Activated naive CD4-positive, alpha-beta T cell treated with anti-CD3 and anti-CD28 coated beads for 36 hours (primary cell): ENCODE measurements at regions of chr2 and their contacts with region 1.

Region 1: GRCh38 chr2:3223080-3223923 is 154.3 kb downstream of the EIPR1 start:
- DNase-seq: peak; percentile 97
- H3K4me3 Mint-ChIP-seq: peak overlapping the region; percentile 35
- H3K27ac Mint-ChIP-seq: peak overlapping the region; percentile 100
- H3K4me1 Mint-ChIP-seq: peaks cover 44% of the 10 kb centered on the region
- H3K27me3 Mint-ChIP-seq: no peaks in the 10 kb centered on the region

Region 2: GRCh38 chr2:1613731-1614354 is 1609.5 kb before region 1 on chr2:
- CTCF ChIA-PET with region 1: no interaction called
- intact Hi-C with region 1: no loop called
- DNase-seq: no peak
- H3K4me3 Mint-ChIP-seq: no peak overlapping the region
- H3K27ac Mint-ChIP-seq: no peak overlapping the region
- H3K4me1 Mint-ChIP-seq: no peaks in the 10 kb centered on the region
- H3K27me3 Mint-ChIP-seq: peaks cover 8% of the 10 kb centered on the region

Region 3: GRCh38 chr2:2613279-2614199 is 609.8 kb before region 1 on chr2:
- CTCF ChIA-PET with region 1: no interaction called
- intact Hi-C with region 1: loop called (anchors 1 kb)
- DNase-seq: peak; percentile 96
- H3K4me3 Mint-ChIP-seq: peak overlapping the region; percentile 76
- H3K27ac Mint-ChIP-seq: peak overlapping the region; percentile 79
- H3K4me1 Mint-ChIP-seq: peaks cover 8% of the 10 kb centered on the region
- H3K27me3 Mint-ChIP-seq: no peaks in the 10 kb centered on the region

Region 4: DNA sequence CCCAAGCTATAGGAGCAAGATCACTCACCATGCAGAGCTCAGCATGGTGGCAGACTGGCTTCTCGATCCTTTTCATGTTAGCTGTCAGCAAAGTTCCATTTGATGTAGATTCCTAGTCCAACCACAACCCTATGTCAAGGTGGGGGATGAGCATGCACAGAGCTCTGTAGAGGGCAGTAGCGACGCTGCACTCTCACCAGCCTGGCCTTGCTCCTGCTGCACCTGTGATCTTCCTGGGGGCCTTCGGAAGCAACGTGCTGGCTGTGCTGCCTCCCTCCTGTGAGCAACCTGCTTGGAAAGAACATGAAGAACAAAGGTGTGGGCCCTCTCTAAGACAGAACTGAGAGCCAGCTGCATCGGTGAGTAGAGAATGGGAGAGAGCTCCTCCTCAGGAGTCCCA is 412.8 kb before region 1 on chr2:
- CTCF ChIA-PET with region 1: no interaction called
- intact Hi-C with region 1: no loop called
- DNase-seq: no peak
- H3K4me3 Mint-ChIP-seq: no peak overlapping the region
- H3K27ac Mint-ChIP-seq: no peak overlapping the region
- H3K4me1 Mint-ChIP-seq: no peaks in the 10 kb centered on the region
- H3K27me3 Mint-ChIP-seq: no peaks in the 10 kb centered on the region

Region 5: GRCh38 chr2:2926009-2926857 is 297.1 kb before region 1 on chr2:
- CTCF ChIA-PET with region 1: no interaction called
- intact Hi-C with region 1: loop called (anchors 1 kb)
- DNase-seq: no peak
- H3K4me3 Mint-ChIP-seq: no peak overlapping the region
- H3K27ac Mint-ChIP-seq: no peak overlapping the region
- H3K4me1 Mint-ChIP-seq: peaks cover 2% of the 10 kb centered on the region
- H3K27me3 Mint-ChIP-seq: peaks cover 10% of the 10 kb centered on the region

Region 6: GRCh38 chr2:3242747-3243369 is 19.6 kb after region 1 on chr2:
- CTCF ChIA-PET with region 1: interaction called, 4 read pairs
- intact Hi-C with region 1: loop called (anchors 1 kb)
- DNase-seq: peak; percentile 72
- H3K4me3 Mint-ChIP-seq: no peak overlapping the region
- H3K27ac Mint-ChIP-seq: peak overlapping the region; percentile 32
- H3K4me1 Mint-ChIP-seq: peaks cover 9% of the 10 kb centered on the region
- H3K27me3 Mint-ChIP-seq: no peaks in the 10 kb centered on the region

Region 7: GRCh38 chr2:3278256-3279218 is 55.2 kb after region 1 on chr2:
- CTCF ChIA-PET with region 1: no interaction called
- intact Hi-C with region 1: loop called (anchors 1 kb)
- DNase-seq: no peak
- H3K4me3 Mint-ChIP-seq: no peak overlapping the region
- H3K27ac Mint-ChIP-seq: peak overlapping the region; percentile 30
- H3K4me1 Mint-ChIP-seq: peaks cover 10% of the 10 kb centered on the region
- H3K27me3 Mint-ChIP-seq: no peaks in the 10 kb centered on the region